MCF 10A (cell line): ENCODE measurements at regions of chr20 and their contacts with region 1.

Region 1: GRCh38 chr20:56788040-56788983 is 159.2 kb downstream of the TFAP2C start:
- DNase-seq: peak; percentile 97
- H3K4me3 Mint-ChIP-seq: peak overlapping the region; percentile 67
- H3K27ac Mint-ChIP-seq: peak overlapping the region; percentile 98
- H3K4me1 Mint-ChIP-seq: peaks cover 32% of the 10 kb centered on the region
- H3K27me3 Mint-ChIP-seq: no peaks in the 10 kb centered on the region
- CTCF ChIP-seq: no peak

Region 2: DNA sequence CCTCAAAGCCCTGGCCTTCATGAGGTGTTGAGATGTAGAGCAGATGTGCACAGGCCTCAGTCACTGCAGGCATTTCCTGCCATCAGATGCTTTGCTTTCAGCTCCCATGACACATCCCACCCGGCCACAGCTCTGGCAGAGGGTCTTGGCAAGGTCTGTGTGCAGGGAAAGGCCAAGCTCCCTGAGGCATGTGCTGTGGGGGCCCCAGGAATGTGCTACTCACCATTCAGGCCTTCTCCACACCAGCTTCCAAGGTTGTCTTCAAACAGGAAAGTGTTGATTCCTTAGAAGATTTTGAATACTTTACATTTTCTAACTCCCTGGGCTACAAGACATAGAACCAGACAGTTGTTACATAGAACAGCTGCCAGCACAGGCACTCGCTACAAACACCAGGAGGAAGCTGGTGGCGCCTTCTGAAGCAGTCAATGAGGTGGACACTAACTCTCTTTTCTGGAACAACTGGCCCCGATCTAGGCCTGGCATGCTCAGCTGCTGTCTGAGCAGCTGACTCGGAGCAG is 348.5 kb before region 1 on chr20:
- CTCF ChIA-PET with region 1: no interaction called
- POLR2A ChIA-PET with region 1: no interaction called
- intact Hi-C with region 1: no loop called
- DNase-seq: no peak
- H3K4me3 Mint-ChIP-seq: no peak overlapping the region
- H3K27ac Mint-ChIP-seq: no peak overlapping the region
- H3K4me1 Mint-ChIP-seq: no peaks in the 10 kb centered on the region
- H3K27me3 Mint-ChIP-seq: no peaks in the 10 kb centered on the region
- CTCF ChIP-seq: no peak

Region 3: DNA sequence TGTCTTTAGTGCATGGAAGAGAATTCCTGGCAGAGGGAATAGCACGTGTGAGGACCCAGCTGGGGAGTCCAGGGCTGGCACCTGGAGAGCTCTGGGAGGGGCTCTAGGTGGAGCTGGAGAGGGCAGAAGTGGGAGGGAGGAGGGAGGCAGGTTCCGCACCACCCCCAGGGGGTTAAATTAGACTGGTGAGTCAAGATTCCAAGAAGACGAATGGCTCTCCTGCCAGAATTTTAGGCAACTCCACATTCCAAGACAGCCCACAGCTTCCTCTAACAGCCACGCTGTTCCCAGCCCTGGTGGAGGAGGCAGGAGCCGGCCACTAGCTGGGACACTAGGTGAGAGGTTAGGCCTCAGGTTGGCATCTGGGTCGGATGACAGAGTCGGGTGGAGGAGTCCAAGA is 99.0 kb before region 1 on chr20:
- CTCF ChIA-PET with region 1: interaction called, 3 read pairs
- POLR2A ChIA-PET with region 1: interaction called, 5 read pairs
- intact Hi-C with region 1: loop called (anchors 2 kb)
- DNase-seq: peak; percentile 96
- H3K4me3 Mint-ChIP-seq: peak overlapping the region; percentile 33
- H3K27ac Mint-ChIP-seq: peak overlapping the region; percentile 72
- H3K4me1 Mint-ChIP-seq: peaks cover 19% of the 10 kb centered on the region
- H3K27me3 Mint-ChIP-seq: no peaks in the 10 kb centered on the region
- CTCF ChIP-seq: no peak

Region 4: DNA sequence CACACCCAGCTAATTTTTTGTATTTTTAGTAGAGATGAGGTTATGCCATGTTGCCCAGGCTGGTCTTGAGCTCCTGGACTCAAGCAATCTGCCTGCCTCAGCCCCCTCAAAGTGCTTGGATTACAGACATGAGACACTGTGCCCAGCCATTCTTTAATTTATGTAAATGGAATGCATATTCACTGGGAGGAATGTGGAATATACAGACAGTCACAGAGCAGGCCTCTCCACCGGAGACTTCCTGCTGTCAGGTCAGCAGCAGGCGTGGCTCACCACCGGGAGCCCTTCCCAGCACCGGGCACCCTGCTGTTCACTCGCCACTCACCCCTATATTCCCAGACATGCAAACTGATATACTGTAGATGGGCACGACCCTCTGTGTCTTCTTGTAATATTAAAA is 76.2 kb before region 1 on chr20:
- CTCF ChIA-PET with region 1: no interaction called
- POLR2A ChIA-PET with region 1: interaction called, 4 read pairs
- intact Hi-C with region 1: loop called (anchors 5 kb)
- DNase-seq: peak; percentile 56
- H3K4me3 Mint-ChIP-seq: no peak overlapping the region
- H3K27ac Mint-ChIP-seq: no peak overlapping the region
- H3K4me1 Mint-ChIP-seq: peaks cover 19% of the 10 kb centered on the region
- H3K27me3 Mint-ChIP-seq: no peaks in the 10 kb centered on the region
- CTCF ChIP-seq: no peak

Region 5: GRCh38 chr20:56826705-56827631 is 38.7 kb after region 1 on chr20:
- CTCF ChIA-PET with region 1: no interaction called
- POLR2A ChIA-PET with region 1: interaction called, 12 read pairs
- intact Hi-C with region 1: no loop called
- DNase-seq: peak; percentile 64
- H3K4me3 Mint-ChIP-seq: peak overlapping the region; percentile 56
- H3K27ac Mint-ChIP-seq: peak overlapping the region; percentile 86
- H3K4me1 Mint-ChIP-seq: peaks cover 8% of the 10 kb centered on the region
- H3K27me3 Mint-ChIP-seq: peaks cover 10% of the 10 kb centered on the region
- CTCF ChIP-seq: no peak

Region 6: GRCh38 chr20:56875046-56875551 is 86.8 kb after region 1 on chr20:
- CTCF ChIA-PET with region 1: interaction called, 3 read pairs
- POLR2A ChIA-PET with region 1: interaction called, 7 read pairs
- intact Hi-C with region 1: loop called (anchors 10 kb)
- DNase-seq: peak; percentile 93
- H3K4me3 Mint-ChIP-seq: no peak overlapping the region
- H3K27ac Mint-ChIP-seq: peak overlapping the region; percentile 72
- H3K4me1 Mint-ChIP-seq: peaks cover 7% of the 10 kb centered on the region
- H3K27me3 Mint-ChIP-seq: no peaks in the 10 kb centered on the region
- CTCF ChIP-seq: no peak